ENCODE measurements at regions of chr9 and their contacts with region 1.

Region 1: GRCh38 chr9:33721674-33722358 is 73.5 kb upstream of the PRSS3 start:
- DNase-seq: peak; percentile 84
- H3K4me3 ChIP-seq: no peak overlapping the region
- H3K27ac ChIP-seq: no peak overlapping the region
- H3K4me1 ChIP-seq: no peaks in the 10 kb centered on the region
- H3K27me3 ChIP-seq: no peaks in the 10 kb centered on the region
- CTCF ChIP-seq: peak; percentile 100

Region 2: DNA sequence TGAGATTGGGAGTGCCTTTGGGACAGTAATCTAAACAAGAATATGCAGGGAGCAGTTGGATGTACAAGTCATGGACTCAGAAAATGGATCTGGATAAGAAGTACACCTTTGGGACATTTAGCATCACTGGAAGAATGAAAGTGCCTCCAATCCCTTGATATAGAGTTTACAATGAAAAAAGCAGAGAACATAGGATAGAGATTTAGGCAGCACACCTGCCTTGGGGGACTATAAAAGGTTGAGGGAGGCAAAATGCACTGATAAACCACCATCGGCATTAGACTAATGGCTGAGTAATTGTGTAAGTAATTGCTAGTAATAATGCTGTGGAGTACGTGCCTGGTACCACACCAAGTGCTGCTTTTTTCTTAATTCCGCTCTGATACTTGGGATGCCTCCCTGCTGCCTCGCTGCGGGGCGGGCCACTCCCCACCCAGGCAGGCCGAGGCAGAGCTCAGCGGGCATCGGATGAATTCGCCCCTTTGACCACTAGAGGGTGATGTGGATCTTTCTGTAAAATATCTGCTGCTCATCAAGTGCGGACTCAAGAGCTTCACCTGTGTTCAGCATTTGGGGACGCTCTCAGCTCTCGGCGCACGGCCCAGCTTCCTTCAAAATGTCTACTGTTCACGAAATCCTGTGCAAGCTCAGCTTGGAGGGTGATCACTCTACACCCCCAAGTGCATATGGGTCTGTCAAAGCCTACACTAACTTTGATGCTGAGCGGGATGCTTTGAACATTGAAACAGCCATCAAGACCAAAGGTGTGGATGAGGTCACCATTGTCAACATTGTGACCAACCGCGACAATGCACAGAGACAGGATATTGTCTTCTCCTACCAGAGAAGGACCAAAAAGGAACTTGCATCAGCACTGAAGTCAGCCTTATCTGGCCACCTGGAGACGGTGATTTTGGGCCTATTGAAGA is 97.9 kb before region 1 on chr9:
- intact Hi-C with region 1: loop called (anchors 2 kb)
- DNase-seq: peak; percentile 67
- H3K4me3 ChIP-seq: no peak overlapping the region
- H3K27ac ChIP-seq: no peak overlapping the region
- H3K4me1 ChIP-seq: no peaks in the 10 kb centered on the region
- H3K27me3 ChIP-seq: no peaks in the 10 kb centered on the region
- CTCF ChIP-seq: peak; percentile 88

Measured in colonic mucosa (tissue), 4 donors.